Ovary (tissue), 10 donors: ENCODE measurements at regions of chr2 and their contacts with region 1.

Region 1: DNA sequence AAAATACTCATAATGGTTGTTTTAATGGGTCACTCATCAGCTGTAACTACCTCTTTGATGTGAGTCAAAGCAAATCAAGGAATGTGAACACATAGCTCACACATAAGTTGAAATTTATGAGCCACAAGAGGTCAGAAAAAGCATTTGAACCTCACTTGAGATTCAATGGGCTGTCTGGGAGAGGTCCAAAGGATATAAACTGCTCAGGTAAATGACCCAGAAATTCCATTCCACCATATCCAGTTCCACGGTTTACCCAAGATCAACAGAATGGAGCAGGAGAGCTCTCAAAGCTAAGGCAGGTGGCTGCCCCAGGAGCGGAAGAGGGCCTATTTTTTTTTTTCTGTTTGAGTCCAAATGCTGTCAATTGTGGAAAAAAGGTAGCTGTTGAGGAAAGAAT is 464.1 kb downstream of the TNS1 start:
- DNase-seq: no peak
- H3K4me3 ChIP-seq: no peak overlapping the region
- H3K27ac ChIP-seq: no peak overlapping the region
- H3K4me1 ChIP-seq: peaks cover 2% of the 10 kb centered on the region
- H3K27me3 ChIP-seq: no peaks in the 10 kb centered on the region
- CTCF ChIP-seq: no peak
- EP300 ChIP-seq: no peak
- POLR2A ChIP-seq: no peak

Region 2: GRCh38 chr2:217501887-217502286 is 36.8 kb before region 1 on chr2:
- intact Hi-C with region 1: no loop called
- DNase-seq: no peak
- H3K4me3 ChIP-seq: no peak overlapping the region
- H3K27ac ChIP-seq: no peak overlapping the region
- H3K4me1 ChIP-seq: no peaks in the 10 kb centered on the region
- H3K27me3 ChIP-seq: no peaks in the 10 kb centered on the region
- CTCF ChIP-seq: no peak
- EP300 ChIP-seq: no peak
- POLR2A ChIP-seq: no peak

Region 3: DNA sequence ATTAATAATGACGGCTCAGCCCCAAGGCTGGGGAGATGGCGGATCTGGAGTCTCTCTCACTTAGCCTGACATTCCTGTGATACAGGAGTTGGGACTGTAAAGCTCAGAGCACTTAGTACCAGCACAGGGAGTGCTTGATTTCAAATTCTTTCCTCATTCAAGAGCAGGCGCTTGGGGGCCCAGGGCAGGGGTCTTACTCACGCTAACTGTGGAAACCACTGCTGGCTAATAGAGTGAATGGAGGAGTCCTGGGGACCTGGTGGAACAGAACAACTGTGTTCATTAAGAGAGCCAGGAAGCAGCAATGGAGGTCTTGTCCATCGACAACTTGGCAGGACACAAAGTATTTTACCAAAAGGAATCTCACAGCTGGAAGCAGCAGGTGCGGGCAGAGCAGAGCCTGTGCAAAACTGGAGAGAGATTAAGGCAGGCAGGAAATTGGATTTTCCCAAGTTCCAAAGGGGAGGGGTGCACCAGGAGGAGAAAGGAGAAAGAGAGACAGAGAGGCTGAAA is 105.1 kb after region 1 on chr2:
- intact Hi-C with region 1: loop called in 1 of 4 experiments (anchors 10 kb)
- DNase-seq: no peak
- H3K4me3 ChIP-seq: no peak overlapping the region
- H3K27ac ChIP-seq: no peak overlapping the region
- H3K4me1 ChIP-seq: no peaks in the 10 kb centered on the region
- H3K27me3 ChIP-seq: no peaks in the 10 kb centered on the region
- CTCF ChIP-seq: no peak
- EP300 ChIP-seq: no peak
- POLR2A ChIP-seq: no peak

Region 4: GRCh38 chr2:217816396-217816869 is 277.7 kb after region 1 on chr2:
- intact Hi-C with region 1: no loop called
- DNase-seq: peak in 4 of 5 donors; percentile 52 to 66 (median 60)
- H3K4me3 ChIP-seq: no peak overlapping the region
- H3K27ac ChIP-seq: peak overlapping the region in 1 of 2 donors; percentile 14
- H3K4me1 ChIP-seq: peaks cover 18% of the 10 kb centered on the region
- H3K27me3 ChIP-seq: no peaks in the 10 kb centered on the region
- CTCF ChIP-seq: no peak
- EP300 ChIP-seq: no peak
- POLR2A ChIP-seq: no peak